Activated B cell treated with CpG ODN at 0.5 μM for 24 hours (primary cell): ENCODE measurements at regions of chr1 and their contacts with region 1.

Region 1: GRCh38 chr1:23598424-23598823 is 39.1 kb upstream of the ID3 start:
- DNase-seq: no peak
- ATAC-seq: no peak
- H3K4me3 Mint-ChIP-seq: no peak overlapping the region
- H3K27ac Mint-ChIP-seq: peak overlapping the region; percentile 82
- H3K4me1 Mint-ChIP-seq: peaks cover 92% of the 10 kb centered on the region
- H3K27me3 Mint-ChIP-seq: no peaks in the 10 kb centered on the region
- CTCF ChIP-seq: no peak

Region 2: GRCh38 chr1:23613191-23614031 is 15.0 kb after region 1 on chr1:
- CTCF ChIA-PET with region 1: interaction called, 4 read pairs
- POLR2A ChIA-PET with region 1: interaction called, 151 read pairs
- intact Hi-C with region 1: no loop called
- DNase-seq: peak; percentile 44
- ATAC-seq: peak; percentile 38
- H3K4me3 Mint-ChIP-seq: no peak overlapping the region
- H3K27ac Mint-ChIP-seq: peak overlapping the region; percentile 92
- H3K4me1 Mint-ChIP-seq: peaks cover 85% of the 10 kb centered on the region
- H3K27me3 Mint-ChIP-seq: no peaks in the 10 kb centered on the region
- CTCF ChIP-seq: no peak

Region 3: DNA sequence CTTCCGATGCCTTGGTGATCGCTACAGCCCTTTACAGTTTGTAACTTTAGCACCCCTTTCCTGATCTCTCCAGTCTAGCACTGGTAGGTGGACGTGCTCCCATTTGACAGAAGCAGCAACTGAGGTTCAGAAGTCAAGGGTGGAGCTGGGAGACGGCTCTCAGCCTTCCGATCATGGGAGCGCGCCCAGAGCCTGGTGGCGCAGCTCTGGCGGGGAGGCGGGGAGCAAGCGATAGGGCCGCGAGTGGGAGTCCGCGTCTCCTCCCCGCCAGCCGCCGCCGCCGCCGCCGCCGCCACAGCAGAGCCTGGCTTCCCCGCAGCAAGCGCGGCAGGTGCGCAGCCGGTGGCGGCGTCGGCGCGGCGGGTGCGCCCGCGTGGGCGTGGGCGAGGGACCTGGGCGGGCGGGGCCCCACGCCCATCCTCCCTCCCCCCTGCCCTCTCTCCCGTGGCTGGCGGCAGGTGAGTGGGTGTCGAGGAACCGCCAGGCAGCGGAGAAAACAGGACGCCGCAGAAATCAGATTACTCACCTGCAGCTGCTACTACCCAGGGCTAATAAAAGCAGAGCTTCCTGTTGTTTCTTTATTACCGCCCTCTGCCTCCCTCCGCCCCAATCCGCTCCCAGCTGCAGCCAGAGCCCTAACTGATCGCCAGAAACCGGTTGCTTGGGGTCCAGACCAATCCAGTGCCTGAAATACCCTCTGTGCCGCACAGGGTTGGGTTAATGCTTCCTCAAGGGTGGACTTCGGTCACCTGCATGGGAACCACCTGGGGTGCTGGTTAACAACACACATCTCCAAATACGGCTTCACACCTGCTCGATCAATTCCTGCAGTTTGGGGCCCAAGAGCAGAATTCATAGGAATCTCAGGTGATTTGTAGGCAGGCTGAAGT is 21.1 kb after region 1 on chr1:
- CTCF ChIA-PET with region 1: no interaction called
- POLR2A ChIA-PET with region 1: interaction called, 151 read pairs
- intact Hi-C with region 1: loop called (anchors 1 kb)
- DNase-seq: peak; percentile 75
- ATAC-seq: peak; percentile 81
- H3K4me3 Mint-ChIP-seq: peak overlapping the region; percentile 81
- H3K27ac Mint-ChIP-seq: peak overlapping the region; percentile 91
- H3K4me1 Mint-ChIP-seq: peaks cover 92% of the 10 kb centered on the region
- H3K27me3 Mint-ChIP-seq: no peaks in the 10 kb centered on the region
- CTCF ChIP-seq: no peak